Heart right ventricle (tissue), 16 donors: ENCODE measurements at regions of chr1 and their contacts with region 1.

Region 1: DNA sequence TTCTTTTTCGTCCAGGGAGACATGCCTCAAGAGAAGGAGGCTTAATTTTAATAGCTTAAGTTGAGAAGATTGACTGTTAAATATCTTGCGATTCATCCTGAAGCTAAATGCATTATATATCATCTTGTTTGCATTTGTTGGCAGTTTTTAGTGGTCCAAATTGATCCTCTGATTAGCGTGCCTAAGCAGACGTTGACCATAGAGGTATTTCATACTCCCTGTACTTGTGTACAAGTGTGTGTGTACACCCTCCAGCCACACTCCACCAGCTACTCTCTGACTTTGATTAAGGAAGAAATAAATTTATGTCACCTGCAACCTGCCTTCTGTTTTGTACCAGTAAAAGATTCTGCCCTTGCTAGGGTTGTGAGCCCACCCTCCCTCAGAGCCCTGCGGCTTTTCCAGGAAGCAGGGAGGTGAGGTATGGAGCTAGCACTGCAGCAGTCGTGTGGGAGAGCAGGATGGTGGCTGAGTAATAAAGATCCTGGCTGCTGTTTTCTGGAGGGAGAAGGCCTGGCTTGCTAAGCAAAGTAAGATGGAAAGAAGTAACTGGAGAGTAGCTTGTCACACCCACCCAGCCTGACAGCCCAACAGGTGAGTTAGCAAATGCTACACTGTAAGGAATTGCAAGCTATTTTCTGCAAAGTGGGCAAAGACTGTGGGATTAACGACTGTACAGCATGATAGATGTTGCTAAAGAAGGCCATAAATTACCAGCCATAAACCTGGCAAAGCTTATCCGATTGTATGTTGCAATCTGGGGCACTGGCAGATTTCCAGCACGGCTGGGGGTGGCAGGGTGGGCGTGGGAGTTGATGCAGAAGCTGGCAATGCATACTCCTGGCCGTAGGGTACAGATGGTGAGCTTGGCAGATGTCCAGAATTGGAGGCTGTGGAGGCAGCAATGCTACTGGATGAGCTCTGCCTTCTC is 170.2 kb downstream of the TNR start:
- DNase-seq: no peak
- ATAC-seq: no peak
- H3K4me3 ChIP-seq: no peak overlapping the region
- H3K27ac ChIP-seq: no peak overlapping the region
- H3K4me1 ChIP-seq: no peaks in the 10 kb centered on the region
- H3K27me3 ChIP-seq: peaks cover 0 to 9% (median 0%) of the 10 kb centered on the region in 7 donors
- CTCF ChIP-seq: no peak

Region 2: DNA sequence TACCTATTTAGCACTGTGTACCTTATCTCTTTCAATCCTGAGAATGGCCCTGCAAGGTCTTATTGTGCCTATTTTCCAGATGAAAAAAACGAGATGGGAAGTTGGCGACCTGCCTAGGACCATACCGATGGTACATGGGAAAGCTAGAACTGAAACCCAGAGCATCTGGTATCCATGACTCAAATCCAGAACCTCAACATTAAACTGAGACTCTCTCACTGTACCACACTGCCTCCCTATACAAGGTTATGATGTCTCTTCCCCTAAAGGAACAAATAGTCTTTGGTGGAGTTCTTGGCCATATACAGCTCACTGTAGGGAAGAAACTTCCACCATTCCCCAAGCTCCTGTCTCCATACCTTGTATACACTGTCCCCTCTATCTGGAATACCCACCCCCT is 59.5 kb after region 1 on chr1:
- intact Hi-C with region 1: loop called in 1 of 10 experiments (anchors 10 kb)
- DNase-seq: no peak
- ATAC-seq: no peak
- H3K4me3 ChIP-seq: no peak overlapping the region
- H3K27ac ChIP-seq: no peak overlapping the region
- H3K4me1 ChIP-seq: no peaks in the 10 kb centered on the region
- H3K27me3 ChIP-seq: peaks cover 0 to 9% (median 0%) of the 10 kb centered on the region in 7 donors
- CTCF ChIP-seq: no peak

Region 3: GRCh38 chr1:175725684-175726083 is 152.5 kb after region 1 on chr1:
- intact Hi-C with region 1: no loop called
- DNase-seq: peak in 1 of 2 donors; percentile 33
- ATAC-seq: no peak
- H3K4me3 ChIP-seq: no peak overlapping the region
- H3K27ac ChIP-seq: no peak overlapping the region
- H3K4me1 ChIP-seq: no peaks in the 10 kb centered on the region
- H3K27me3 ChIP-seq: peaks cover 0 to 13% (median 0%) of the 10 kb centered on the region in 7 donors
- CTCF ChIP-seq: no peak